ENCODE measurements at regions of chr15 and their contacts with region 1.

Region 1: GRCh38 chr15:66774001-66774814 is 72.2 kb downstream of the SMAD6 start:
- DNase-seq: peak; percentile 87 to 92 (median 91)
- ATAC-seq: peak; percentile 91
- H3K4me3 ChIP-seq: no peak overlapping the region
- H3K27ac ChIP-seq: peak overlapping the region; percentile 79 to 91 (median 86)
- H3K4me1 ChIP-seq: peaks cover 60% of the 10 kb centered on the region
- H3K27me3 ChIP-seq: no peaks in the 10 kb centered on the region
- CTCF ChIP-seq: peak; percentile 96 to 99 (median 99)
- POLR2A ChIP-seq: no peak

Region 2: GRCh38 chr15:66619151-66619903 is 154.9 kb before region 1 on chr15:
- intact Hi-C with region 1: loop called (anchors 5 kb)
- DNase-seq: peak; percentile 82 to 87 (median 83)
- ATAC-seq: peak; percentile 91
- H3K4me3 ChIP-seq: no peak overlapping the region
- H3K27ac ChIP-seq: no peak overlapping the region
- H3K4me1 ChIP-seq: peaks cover 16% of the 10 kb centered on the region
- H3K27me3 ChIP-seq: no peaks in the 10 kb centered on the region
- CTCF ChIP-seq: peak; percentile 70 to 91 (median 84)
- POLR2A ChIP-seq: no peak

Region 3: GRCh38 chr15:66698318-66698961 is 75.8 kb before region 1 on chr15:
- intact Hi-C with region 1: loop called (anchors 5 kb)
- DNase-seq: peak; percentile 65 to 76 (median 72)
- ATAC-seq: no peak
- H3K4me3 ChIP-seq: no peak overlapping the region
- H3K27ac ChIP-seq: no peak overlapping the region
- H3K4me1 ChIP-seq: peaks cover 16% of the 10 kb centered on the region
- H3K27me3 ChIP-seq: no peaks in the 10 kb centered on the region
- CTCF ChIP-seq: peak; percentile 60 to 76 (median 65)
- POLR2A ChIP-seq: no peak

Region 4: GRCh38 chr15:66851226-66852071 is 77.2 kb after region 1 on chr15:
- intact Hi-C with region 1: loop called (anchors 5 kb)
- DNase-seq: peak; percentile 83 to 87 (median 86)
- ATAC-seq: peak; percentile 96
- H3K4me3 ChIP-seq: no peak overlapping the region
- H3K27ac ChIP-seq: no peak overlapping the region
- H3K4me1 ChIP-seq: peaks cover 17% of the 10 kb centered on the region
- H3K27me3 ChIP-seq: no peaks in the 10 kb centered on the region
- CTCF ChIP-seq: peak; percentile 94 to 96 (median 95)
- POLR2A ChIP-seq: no peak

Region 5: DNA sequence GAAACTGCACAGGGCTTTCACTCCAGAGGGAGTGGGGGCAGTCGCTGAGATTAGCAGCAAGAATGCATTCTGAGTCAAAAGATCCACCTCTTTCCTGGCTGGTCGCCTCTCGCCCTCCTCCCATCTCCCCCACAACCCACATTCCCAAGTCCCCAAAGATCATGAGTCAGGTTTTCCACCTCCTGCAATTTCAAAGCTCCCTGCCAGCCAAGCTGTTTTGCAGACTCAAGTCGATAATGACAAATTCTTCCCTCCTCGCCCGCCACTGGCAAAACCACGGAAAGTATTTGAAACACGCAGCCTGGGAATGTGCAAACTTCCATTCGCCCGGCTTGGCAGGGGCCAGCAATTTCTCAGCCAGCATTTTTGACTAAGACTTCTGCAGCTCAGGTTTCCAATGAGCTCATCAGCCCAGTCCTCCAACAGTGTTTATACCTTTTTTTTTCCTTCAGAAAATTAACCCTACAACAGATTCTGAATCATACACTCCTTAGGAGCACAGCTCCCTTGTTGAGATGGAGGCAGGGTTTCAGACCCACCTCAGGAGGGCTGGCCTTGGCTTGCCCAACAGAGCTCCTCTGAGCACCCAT is 109.2 kb after region 1 on chr15:
- intact Hi-C with region 1: no loop called
- DNase-seq: peak; percentile 83 to 91 (median 86)
- ATAC-seq: peak; percentile 88
- H3K4me3 ChIP-seq: no peak overlapping the region
- H3K27ac ChIP-seq: peak overlapping the region; percentile 11 to 78 (median 64)
- H3K4me1 ChIP-seq: peaks cover 28% of the 10 kb centered on the region
- H3K27me3 ChIP-seq: no peaks in the 10 kb centered on the region
- CTCF ChIP-seq: no peak
- POLR2A ChIP-seq: no peak

Measured in body of pancreas (tissue), 4 donors.